ENCODE measurements at regions of chr10 and their contacts with region 1.

Region 1: DNA sequence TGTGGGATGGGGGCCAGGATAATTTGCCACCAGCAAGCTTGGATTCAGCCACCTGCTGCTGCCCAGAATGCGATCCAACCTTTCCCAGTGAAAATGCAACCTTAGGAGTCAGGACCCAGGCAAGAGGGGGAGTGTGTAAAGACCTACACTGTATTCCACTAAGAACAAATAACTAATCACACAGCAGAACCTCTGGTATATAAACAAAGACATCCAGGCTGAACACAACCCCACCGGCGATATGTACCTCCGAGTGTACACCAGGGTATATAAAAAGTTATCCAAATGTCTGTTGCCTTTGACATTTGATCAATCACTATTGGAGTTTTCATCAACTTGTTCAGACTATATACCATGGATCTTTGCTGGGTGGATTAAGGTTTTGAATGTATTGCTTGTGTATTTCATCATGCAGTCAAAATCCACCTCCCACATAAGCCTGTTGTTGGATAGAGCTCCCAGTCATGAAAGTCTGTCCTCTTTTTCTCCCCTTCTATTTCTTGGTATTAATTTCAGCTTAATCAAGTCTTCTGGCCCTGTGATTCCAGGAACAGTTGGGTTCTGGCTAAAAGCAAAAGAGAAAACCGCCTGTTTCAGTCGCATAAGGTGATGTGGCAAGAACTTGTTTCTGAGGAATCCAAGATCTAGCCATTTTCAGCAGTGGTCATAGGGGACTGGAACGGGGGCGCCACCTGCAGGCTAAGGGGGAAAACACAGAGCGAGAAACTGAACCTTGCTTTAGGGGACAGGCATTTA is 290.7 kb downstream of the CCDC3 start:
- DNase-seq: peak in 1 of 2 donors; percentile 49
- ATAC-seq: peak; percentile 72
- H3K4me3 ChIP-seq: no peak overlapping the region
- H3K27ac ChIP-seq: no peak overlapping the region
- H3K4me1 ChIP-seq: peaks cover 2 to 15% of the 10 kb centered on the region in 2 donors
- H3K27me3 ChIP-seq: no peaks in the 10 kb centered on the region
- CTCF ChIP-seq: peak; percentile 73 to 88 (median 74)
- POLR2A ChIP-seq: no peak

Region 2: DNA sequence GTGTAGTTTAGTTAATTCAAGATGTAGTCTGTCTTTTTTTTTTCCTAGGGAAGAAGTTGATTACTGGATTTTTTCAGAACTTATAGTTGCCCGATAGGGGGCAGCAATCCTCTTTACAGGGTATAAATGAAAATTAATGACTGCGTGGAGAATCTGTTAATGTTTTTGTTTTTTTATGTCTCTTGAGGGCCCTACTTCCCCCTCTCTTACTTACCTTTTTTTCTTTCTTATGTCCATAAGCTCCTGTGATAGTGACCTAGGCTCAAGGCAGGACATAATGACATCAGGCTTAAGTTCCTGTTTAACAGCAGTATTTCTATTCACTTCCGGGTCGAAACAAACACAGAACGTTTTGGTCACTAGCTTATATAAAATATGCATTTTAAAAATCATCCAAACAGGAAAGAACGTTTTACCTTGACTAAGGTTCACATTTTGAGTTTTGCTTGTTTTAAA is 496.0 kb before region 1 on chr10:
- in situ Hi-C with region 1: no loop called
- intact Hi-C with region 1: loop called (anchors 5 kb)
- DNase-seq: no peak
- ATAC-seq: no peak
- H3K4me3 ChIP-seq: peak overlapping the region in 3 of 4 donors; percentile 9 to 29 (median 14)
- H3K27ac ChIP-seq: peak overlapping the region in 1 of 4 donors; percentile 27
- H3K4me1 ChIP-seq: peaks cover 11 to 16% of the 10 kb centered on the region in 2 donors
- H3K27me3 ChIP-seq: no peaks in the 10 kb centered on the region
- CTCF ChIP-seq: peak in 4 of 5 experiments; percentile 21 to 61 (median 35)
- POLR2A ChIP-seq: no peak

Region 3: GRCh38 chr10:12264204-12264940 is 446.4 kb before region 1 on chr10:
- in situ Hi-C with region 1: loop called (anchors 5 to 10 kb)
- intact Hi-C with region 1: loop called (anchors 1 kb)
- DNase-seq: peak; percentile 22 to 36
- ATAC-seq: peak; percentile 39 to 65
- H3K4me3 ChIP-seq: peak overlapping the region in 3 of 4 donors; percentile 33 to 47 (median 41)
- H3K27ac ChIP-seq: peak overlapping the region in 1 of 4 donors; percentile 22
- H3K4me1 ChIP-seq: no peaks in the 10 kb centered on the region
- H3K27me3 ChIP-seq: no peaks in the 10 kb centered on the region
- CTCF ChIP-seq: peak; percentile 48 to 84 (median 73)
- POLR2A ChIP-seq: no peak

Region 4: GRCh38 chr10:12902135-12902572 is 191.4 kb after region 1 on chr10:
- in situ Hi-C with region 1: loop called in 3 of 4 experiments (anchors 5 to 10 kb)
- intact Hi-C with region 1: no loop called
- DNase-seq: no peak
- ATAC-seq: no peak
- H3K4me3 ChIP-seq: no peak overlapping the region
- H3K27ac ChIP-seq: no peak overlapping the region
- H3K4me1 ChIP-seq: no peaks in the 10 kb centered on the region
- H3K27me3 ChIP-seq: no peaks in the 10 kb centered on the region
- CTCF ChIP-seq: peak; percentile 20 to 75 (median 63)
- POLR2A ChIP-seq: no peak

Region 5: DNA sequence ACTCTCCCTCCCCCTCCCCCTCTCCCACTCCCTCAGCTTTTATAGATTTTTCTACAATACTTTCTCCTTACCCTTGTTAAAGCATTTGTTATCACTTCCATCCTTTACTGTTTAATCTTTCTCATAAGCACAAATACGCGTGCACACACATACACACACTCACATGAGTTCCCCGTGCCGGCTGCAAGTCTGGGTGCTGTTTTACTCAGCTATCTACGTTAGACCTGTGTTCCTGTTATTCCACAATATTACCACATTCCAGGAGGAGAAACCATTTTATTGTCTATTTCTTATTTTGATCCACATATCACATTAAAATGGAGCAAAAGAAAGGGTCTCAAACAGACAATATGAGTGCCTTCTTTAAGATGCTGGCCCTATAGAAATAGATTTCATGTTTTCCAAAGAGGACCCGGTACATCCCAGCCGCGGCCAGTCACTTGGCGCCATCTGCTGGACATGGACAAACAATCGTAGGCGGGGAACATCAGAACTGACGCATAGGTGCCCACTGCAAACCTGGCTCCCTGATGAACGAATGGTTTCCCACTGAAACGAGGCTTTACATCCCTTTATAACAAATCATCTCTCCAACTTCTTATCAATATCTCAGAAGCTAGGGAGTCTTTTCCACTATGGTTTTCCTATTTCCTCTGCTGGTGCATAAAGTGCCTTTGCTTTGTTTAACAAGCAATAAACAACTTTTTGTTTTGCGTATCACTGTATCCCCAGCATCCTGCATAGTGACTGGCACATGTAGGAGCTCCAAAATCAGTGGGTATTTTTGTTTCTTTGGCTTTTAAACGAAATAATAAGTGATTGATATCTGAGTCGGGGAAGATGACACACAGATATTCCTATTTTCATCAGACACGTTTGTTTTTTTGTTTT is 364.0 kb after region 1 on chr10:
- in situ Hi-C with region 1: loop called in 2 of 4 experiments (anchors 10 kb)
- intact Hi-C with region 1: no loop called
- DNase-seq: peak in 1 of 2 donors; percentile 33
- ATAC-seq: peak in 1 of 2 donors; percentile 56
- H3K4me3 ChIP-seq: no peak overlapping the region
- H3K27ac ChIP-seq: no peak overlapping the region
- H3K4me1 ChIP-seq: no peaks in the 10 kb centered on the region
- H3K27me3 ChIP-seq: peaks cover 0 to 4% (median 0%) of the 10 kb centered on the region in 3 donors
- CTCF ChIP-seq: peak; percentile 50 to 85 (median 66)
- POLR2A ChIP-seq: no peak

Region 6: DNA sequence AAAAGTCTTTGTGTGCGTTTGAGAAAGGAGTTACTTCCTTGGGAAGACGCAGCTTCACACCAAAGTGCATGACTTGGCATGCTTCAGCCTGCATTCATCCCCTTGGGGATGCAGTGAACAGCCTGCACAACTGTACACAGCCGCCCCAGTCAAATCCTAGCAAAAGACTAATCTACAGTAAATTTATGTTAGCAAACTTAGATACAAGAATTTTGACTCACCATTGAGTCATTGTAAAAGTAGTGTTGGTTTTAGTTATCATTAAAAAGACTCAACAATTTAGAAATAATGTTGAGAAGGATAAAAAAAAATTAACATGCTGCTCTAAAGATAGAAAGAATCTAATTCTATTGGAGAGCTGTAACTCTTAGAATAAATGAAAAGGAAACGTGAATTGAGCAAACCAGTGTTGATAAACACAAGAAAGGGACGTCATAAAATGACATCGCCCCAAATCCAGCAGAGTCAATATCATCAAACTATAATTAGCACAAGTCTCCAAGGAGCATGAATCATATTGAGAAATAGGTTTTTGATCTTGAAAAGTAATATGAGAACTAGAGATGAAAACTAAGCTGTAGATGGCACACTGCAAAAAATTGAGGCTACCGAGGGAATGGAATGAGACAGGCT is 377.3 kb after region 1 on chr10:
- in situ Hi-C with region 1: loop called in 1 of 4 experiments (anchors 10 kb)
- intact Hi-C with region 1: no loop called
- DNase-seq: no peak
- ATAC-seq: peak; percentile 73 to 87
- H3K4me3 ChIP-seq: no peak overlapping the region
- H3K27ac ChIP-seq: peak overlapping the region in 3 of 4 donors; percentile 41 to 50 (median 47)
- H3K4me1 ChIP-seq: peaks cover 0 to 4% of the 10 kb centered on the region in 2 donors
- H3K27me3 ChIP-seq: no peaks in the 10 kb centered on the region
- CTCF ChIP-seq: no peak
- POLR2A ChIP-seq: no peak

Measured in gastrocnemius medialis (tissue), 4 donors.